Activated CD4-positive, alpha-beta T cell treated with anti-CD3 and anti-CD28 coated beads for 36 hours (primary cell): ENCODE measurements at regions of chr17 and their contacts with region 1.

Region 1: DNA sequence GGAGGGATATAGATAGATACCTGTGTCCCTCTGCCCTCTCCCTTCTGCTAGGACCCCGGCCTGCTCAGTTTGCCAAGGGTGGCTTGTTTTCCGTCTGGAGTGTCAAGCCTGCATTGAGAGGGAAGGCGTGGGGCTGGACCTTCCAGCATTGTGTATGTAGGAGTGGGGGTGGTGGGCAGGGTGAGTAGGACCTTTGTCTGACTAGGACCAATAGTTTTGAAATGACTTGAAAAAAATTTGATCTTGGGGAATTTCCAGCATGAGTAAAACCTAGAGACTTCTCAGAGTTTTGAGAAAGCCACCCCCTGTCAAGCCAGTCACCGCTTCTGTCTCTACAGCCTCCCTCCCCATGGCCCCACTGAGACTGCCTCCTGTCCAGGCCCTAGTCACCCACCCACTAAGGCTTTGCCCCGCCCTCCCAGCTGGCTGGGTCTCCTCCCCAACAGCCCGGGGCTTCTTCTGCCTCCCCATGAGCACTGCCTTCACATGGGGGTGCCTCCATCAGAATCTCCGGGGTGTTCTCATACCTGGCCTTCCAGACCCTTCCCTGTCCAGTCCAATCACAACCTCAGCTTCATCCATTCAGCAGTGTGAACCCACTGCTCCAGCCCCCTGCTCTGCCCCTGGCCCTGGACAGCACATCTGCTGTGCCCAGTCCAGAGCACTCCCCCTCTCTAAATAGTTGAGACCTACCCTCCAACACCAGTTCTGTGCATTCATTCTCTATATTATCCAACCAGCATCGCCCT is 207.0 kb downstream of the MSI2 start:
- DNase-seq: peak; percentile 94
- ATAC-seq: peak; percentile 93
- H3K4me3 Mint-ChIP-seq: peak overlapping the region; percentile 26
- H3K27ac Mint-ChIP-seq: peak overlapping the region; percentile 94
- H3K4me1 Mint-ChIP-seq: peaks cover 71% of the 10 kb centered on the region
- H3K27me3 Mint-ChIP-seq: no peaks in the 10 kb centered on the region

Region 2: DNA sequence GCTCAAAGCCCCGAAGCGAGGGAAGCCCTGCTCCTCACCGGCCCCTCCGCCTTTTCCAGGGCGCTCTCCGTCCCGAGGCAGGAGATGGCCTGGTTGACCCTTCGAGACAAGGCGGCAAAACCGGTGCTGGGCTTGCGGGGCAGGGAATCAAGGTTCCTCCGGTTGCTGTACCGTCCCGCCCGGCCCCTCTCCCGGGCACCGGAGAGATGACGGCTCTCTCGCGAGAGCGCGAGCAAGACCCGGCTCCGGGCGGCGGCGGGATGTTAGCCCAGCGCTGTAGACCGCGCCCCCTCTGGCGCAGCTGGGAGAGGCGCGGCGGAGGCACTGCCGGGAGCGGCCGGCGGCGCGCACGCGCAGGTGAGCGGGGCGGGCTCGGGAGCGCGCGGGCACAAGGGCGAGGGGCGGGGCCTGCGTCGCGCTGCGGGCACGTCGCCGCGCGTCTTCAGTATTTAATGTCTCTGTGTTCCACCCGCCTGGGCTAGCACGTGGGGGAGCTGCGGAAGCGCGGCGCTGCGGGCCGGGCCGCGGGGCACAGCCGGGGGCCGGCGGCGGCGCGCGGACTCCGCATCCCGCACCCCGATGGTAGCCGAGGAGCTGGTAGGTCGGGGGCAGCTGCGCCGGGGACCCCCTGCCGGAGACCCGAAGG is 378.4 kb before region 1 on chr17 and contains the start of gene AKAP1:
- CTCF ChIA-PET with region 1: no interaction called
- POLR2A ChIA-PET with region 1: no interaction called
- intact Hi-C with region 1: loop called in 1 of 2 experiments (anchors 2 kb)
- DNase-seq: peak; percentile 97
- ATAC-seq: peak; percentile 96
- H3K4me3 Mint-ChIP-seq: peak within 1 kb of the TSS; percentile 81
- H3K27ac Mint-ChIP-seq: peak within 1 kb of the TSS; percentile 87
- H3K4me1 Mint-ChIP-seq: peaks cover 44% of the 10 kb centered on the region
- H3K27me3 Mint-ChIP-seq: no peaks in the 10 kb centered on the region
- total RNA-seq, gene AKAP1: 27.0 to 29.8 TPM

Region 3: DNA sequence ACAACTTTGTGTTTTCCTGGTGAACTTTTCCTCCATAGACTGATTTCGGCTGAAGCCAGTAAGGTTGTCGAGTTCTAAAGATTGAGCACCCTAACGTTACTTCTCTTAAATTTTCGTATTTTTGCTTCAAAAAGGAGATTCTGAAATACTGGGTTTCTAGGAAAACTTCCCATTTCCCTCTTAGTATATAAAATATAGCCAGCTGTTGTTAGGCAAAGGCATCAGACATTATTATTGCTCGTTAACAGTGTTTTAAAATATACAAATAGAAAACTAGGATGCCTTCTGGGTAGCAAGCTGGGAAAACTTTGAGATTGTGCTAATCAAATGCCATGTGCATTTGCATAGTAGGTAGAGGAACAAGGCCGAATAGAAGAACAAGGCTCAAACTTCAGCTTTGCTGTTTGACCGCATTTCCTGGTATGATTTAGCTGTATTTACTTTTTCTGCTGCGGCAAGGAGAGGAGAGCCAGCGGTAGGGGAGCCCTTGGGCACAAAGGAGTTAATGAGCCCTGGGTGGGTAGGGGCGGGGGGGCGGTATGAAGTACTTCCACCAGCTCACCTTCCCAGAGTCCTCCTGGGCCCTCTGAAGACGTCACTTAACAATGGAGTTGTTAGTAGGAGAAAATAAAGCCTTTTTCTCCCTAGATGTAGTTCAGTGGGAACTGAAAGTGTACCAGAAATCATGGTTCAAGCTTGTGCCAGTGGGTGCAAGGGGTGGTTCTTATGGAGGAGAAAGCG is 55.0 kb before region 1 on chr17:
- CTCF ChIA-PET with region 1: interaction called, 10 read pairs
- POLR2A ChIA-PET with region 1: no interaction called
- intact Hi-C with region 1: no loop called
- DNase-seq: peak; percentile 72
- ATAC-seq: peak; percentile 82
- H3K4me3 Mint-ChIP-seq: peak overlapping the region; percentile 7
- H3K27ac Mint-ChIP-seq: peak overlapping the region; percentile 44
- H3K4me1 Mint-ChIP-seq: peaks cover 40% of the 10 kb centered on the region
- H3K27me3 Mint-ChIP-seq: no peaks in the 10 kb centered on the region

Region 4: GRCh38 chr17:57604771-57605674 is 141.7 kb after region 1 on chr17:
- CTCF ChIA-PET with region 1: interaction called, 3 read pairs
- POLR2A ChIA-PET with region 1: no interaction called
- intact Hi-C with region 1: loop called (anchors 2 to 5 kb)
- DNase-seq: peak; percentile 56
- ATAC-seq: peak; percentile 21
- H3K4me3 Mint-ChIP-seq: peak overlapping the region; percentile 22
- H3K27ac Mint-ChIP-seq: peak overlapping the region; percentile 97
- H3K4me1 Mint-ChIP-seq: peaks cover 75% of the 10 kb centered on the region
- H3K27me3 Mint-ChIP-seq: no peaks in the 10 kb centered on the region